ENCODE measurements at regions of chr9 and their contacts with region 1.

Region 1: GRCh38 chr9:115466756-115467155 is 348.8 kb upstream of the TNC start:
- DNase-seq: no peak
- H3K4me3 ChIP-seq: no peak overlapping the region
- H3K27ac ChIP-seq: no peak overlapping the region
- H3K4me1 ChIP-seq: no peaks in the 10 kb centered on the region
- H3K27me3 ChIP-seq: no peaks in the 10 kb centered on the region
- CTCF ChIP-seq: no peak

Region 2: DNA sequence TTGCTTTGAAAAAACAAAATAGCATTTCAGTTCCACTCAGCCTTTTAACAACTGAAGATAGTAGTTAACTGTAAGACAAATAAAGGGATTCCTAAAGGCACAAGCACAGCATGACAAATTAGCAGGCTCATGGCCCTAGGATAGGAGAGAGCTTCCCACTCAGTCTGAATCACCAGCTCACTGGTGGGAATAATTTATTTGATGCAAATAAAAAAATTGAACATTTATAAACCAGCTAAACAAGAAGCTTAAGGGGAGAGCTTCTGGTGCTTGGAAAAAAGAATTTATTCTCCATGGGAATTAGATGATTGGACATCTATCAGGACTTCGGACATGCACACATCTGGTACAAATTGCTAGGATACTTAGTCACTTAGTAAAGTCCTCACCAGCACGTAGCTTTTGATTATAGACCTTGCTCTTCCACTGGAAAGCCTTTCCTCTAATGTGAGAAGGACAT is 54.7 kb before region 1 on chr9:
- CTCF ChIA-PET with region 1: no interaction called
- dilution Hi-C with region 1: loop called (anchors 10 kb)
- in situ Hi-C with region 1: no loop called
- intact Hi-C with region 1: no loop called
- DNase-seq: no peak
- H3K4me3 ChIP-seq: no peak overlapping the region
- H3K27ac ChIP-seq: no peak overlapping the region
- H3K4me1 ChIP-seq: no peaks in the 10 kb centered on the region
- H3K27me3 ChIP-seq: no peaks in the 10 kb centered on the region
- CTCF ChIP-seq: no peak

Region 3: GRCh38 chr9:115437418-115437817 is 29.3 kb before region 1 on chr9:
- CTCF ChIA-PET with region 1: no interaction called
- dilution Hi-C with region 1: no loop called
- in situ Hi-C with region 1: no loop called
- intact Hi-C with region 1: no loop called
- DNase-seq: no peak
- H3K4me3 ChIP-seq: no peak overlapping the region
- H3K27ac ChIP-seq: no peak overlapping the region
- H3K4me1 ChIP-seq: no peaks in the 10 kb centered on the region
- H3K27me3 ChIP-seq: no peaks in the 10 kb centered on the region
- CTCF ChIP-seq: no peak

Region 4: DNA sequence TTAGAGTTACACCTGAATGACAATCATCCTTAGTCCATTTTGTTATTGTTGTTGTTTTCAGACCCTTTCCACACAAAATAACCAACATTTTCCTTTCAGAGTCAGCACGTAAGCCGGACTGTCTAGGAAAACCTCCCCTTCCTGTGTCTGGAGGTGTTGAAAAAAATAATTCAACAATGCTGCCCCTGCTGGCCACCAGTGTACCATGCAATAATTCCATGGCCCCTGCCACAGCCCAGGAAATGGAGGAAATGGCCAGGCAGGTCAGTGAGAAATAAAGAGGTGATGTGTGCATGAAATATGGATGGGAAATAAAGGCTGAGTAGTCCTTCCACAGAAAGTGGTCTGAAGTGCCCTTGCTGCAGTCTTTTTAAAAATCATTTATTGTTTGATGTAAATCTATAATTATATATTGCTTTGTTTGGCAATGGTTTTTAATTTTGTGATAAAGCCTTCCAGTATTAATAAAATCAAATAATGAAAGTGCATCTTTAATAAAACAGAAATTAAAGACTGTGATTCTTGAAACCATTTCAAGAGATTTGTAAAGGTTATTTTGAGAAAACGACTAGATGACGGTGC is 534.1 kb after region 1 on chr9:
- CTCF ChIA-PET with region 1: no interaction called
- dilution Hi-C with region 1: no loop called
- in situ Hi-C with region 1: no loop called
- intact Hi-C with region 1: no loop called
- DNase-seq: no peak
- H3K4me3 ChIP-seq: no peak overlapping the region
- H3K27ac ChIP-seq: no peak overlapping the region
- H3K4me1 ChIP-seq: peaks cover 34% of the 10 kb centered on the region
- H3K27me3 ChIP-seq: no peaks in the 10 kb centered on the region
- CTCF ChIP-seq: peak; percentile 48 to 61